ENCODE measurements at regions of chr1 and their contacts with region 1.

Region 1: DNA sequence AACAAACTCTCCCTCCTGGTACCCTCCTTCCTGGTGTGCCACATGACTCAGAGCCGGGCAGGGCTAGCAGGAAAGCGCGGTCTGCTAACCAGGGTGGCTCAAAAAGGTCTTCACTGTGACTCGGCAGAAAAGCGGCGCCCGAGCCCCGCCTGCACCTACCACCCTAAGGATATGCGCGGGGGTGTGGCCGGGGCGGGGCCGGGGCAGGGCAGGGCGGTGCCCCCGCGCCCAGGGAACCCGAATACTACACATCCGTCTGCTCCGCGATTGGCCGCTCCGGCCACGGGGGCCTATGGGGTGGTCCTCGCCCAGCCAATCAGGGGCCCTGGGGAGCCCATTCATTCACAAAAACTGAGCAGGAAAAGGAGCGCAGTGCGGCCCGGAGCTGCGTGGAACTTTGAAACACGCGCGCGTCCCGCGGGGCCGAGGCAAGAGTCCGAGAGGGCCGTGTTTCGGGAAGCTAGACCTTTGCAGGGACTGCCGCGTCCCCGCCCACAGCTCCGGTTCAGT is 1.7 kb downstream of the LRP8 start:
- DNase-seq: peak; percentile 97
- H3K4me3 ChIP-seq: peak overlapping the region; percentile 52 to 85 (median 75)
- H3K27ac ChIP-seq: peak overlapping the region; percentile 78
- H3K4me1 ChIP-seq: peaks cover 20% of the 10 kb centered on the region
- H3K27me3 ChIP-seq: no peaks in the 10 kb centered on the region
- CTCF ChIP-seq: no peak

Region 2: DNA sequence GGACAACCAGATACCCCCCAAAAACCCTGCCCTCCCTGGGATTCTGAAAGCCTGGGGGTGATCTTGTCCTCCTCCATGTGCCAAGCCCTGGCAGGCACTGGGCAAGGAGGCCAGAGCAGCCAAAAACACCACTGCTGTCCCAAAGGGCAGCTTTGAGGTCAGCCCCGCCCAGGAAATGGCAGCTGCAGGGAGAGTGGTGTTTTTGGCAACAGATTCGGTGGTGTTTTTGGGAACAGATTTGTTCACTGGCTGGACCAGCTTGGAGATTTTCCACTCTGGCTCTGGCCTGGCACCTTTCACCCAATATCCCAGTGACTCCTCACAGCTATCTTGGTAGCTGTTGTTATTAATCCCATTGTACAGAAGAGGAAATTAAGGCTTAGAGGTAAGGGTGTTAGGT is 33.0 kb before region 1 on chr1:
- CTCF ChIA-PET with region 1: no interaction called
- dilution Hi-C with region 1: no loop called
- in situ Hi-C with region 1: no loop called
- intact Hi-C with region 1: no loop called
- DNase-seq: no peak
- H3K4me3 ChIP-seq: no peak overlapping the region
- H3K27ac ChIP-seq: no peak overlapping the region
- H3K4me1 ChIP-seq: peaks cover 36% of the 10 kb centered on the region
- H3K27me3 ChIP-seq: no peaks in the 10 kb centered on the region
- CTCF ChIP-seq: no peak

Region 3: GRCh38 chr1:53413175-53414001 is 87.2 kb after region 1 on chr1:
- CTCF ChIA-PET with region 1: no interaction called
- dilution Hi-C with region 1: loop called (anchors 5 kb)
- in situ Hi-C with region 1: no loop called
- intact Hi-C with region 1: no loop called
- DNase-seq: peak; percentile 84
- H3K4me3 ChIP-seq: no peak overlapping the region
- H3K27ac ChIP-seq: no peak overlapping the region
- H3K4me1 ChIP-seq: peaks cover 15% of the 10 kb centered on the region
- H3K27me3 ChIP-seq: peaks cover 3% of the 10 kb centered on the region
- CTCF ChIP-seq: no peak

Measured in mammary epithelial cell (primary cell).